ENCODE measurements at regions of chr17 and their contacts with region 1.

Region 1: GRCh38 chr17:29143894-29144293 is 36.3 kb downstream of the MYO18A start:
- DNase-seq: peak; percentile 37
- ATAC-seq: no peak
- H3K4me3 ChIP-seq: no peak overlapping the region
- H3K27ac ChIP-seq: no peak overlapping the region
- H3K4me1 ChIP-seq: peaks cover 11% of the 10 kb centered on the region
- H3K27me3 ChIP-seq: no peaks in the 10 kb centered on the region
- CTCF ChIP-seq: peak; percentile 52

Region 2: GRCh38 chr17:29124117-29124924 is 19.6 kb before region 1 on chr17:
- CTCF ChIA-PET with region 1: interaction called, 23 read pairs
- POLR2A ChIA-PET with region 1: no interaction called
- intact Hi-C with region 1: loop called (anchors 1 kb)
- DNase-seq: peak; percentile 72
- ATAC-seq: peak; percentile 92
- H3K4me3 ChIP-seq: no peak overlapping the region
- H3K27ac ChIP-seq: no peak overlapping the region
- H3K4me1 ChIP-seq: peaks cover 14% of the 10 kb centered on the region
- H3K27me3 ChIP-seq: no peaks in the 10 kb centered on the region
- CTCF ChIP-seq: peak; percentile 67

Region 3: DNA sequence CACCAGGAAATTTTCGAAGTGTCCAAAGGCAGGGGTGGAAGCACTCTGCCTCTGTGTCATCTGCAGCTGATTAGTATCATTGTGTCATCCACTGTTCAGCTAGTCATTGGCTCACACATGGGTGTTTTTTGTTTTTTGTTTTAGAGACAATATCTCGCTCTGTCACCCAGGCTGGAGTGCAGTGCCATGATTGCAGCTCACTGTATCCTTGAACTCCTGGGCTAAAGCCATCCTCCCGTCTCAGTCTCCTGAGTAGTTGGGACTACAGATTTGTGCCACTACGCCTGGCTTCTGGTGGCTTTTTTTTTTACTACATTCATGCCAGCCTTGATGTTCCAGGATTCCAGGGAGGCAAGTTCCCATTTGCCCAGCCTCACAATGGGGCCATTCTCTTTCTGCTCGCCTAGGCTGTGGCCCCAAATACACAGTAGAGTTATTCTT is 68.8 kb after region 1 on chr17:
- CTCF ChIA-PET with region 1: no interaction called
- POLR2A ChIA-PET with region 1: no interaction called
- intact Hi-C with region 1: no loop called
- DNase-seq: no peak
- ATAC-seq: no peak
- H3K4me3 ChIP-seq: no peak overlapping the region
- H3K27ac ChIP-seq: no peak overlapping the region
- H3K4me1 ChIP-seq: no peaks in the 10 kb centered on the region
- H3K27me3 ChIP-seq: no peaks in the 10 kb centered on the region
- CTCF ChIP-seq: no peak

Region 4: DNA sequence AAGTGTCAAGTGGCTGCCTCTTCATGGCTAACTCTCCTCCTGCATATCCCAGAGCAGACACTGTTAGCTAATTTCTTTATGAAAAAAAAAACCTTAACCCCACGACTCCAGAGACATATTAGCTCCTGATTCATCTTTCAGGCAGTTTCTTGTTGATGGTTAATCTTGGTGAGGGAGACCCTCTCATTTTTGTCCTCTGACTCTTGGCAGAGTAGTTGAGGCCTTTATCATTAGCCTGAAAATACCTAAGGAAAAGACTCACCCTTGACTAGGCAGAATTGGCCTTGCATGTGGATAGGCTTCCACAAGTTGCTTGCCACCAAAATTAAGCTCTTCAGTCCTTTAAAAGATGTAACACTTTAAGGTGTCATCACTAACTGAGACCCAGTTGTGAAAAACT is 106.8 kb after region 1 on chr17:
- CTCF ChIA-PET with region 1: no interaction called
- POLR2A ChIA-PET with region 1: no interaction called
- intact Hi-C with region 1: no loop called
- DNase-seq: no peak
- ATAC-seq: no peak
- H3K4me3 ChIP-seq: no peak overlapping the region
- H3K27ac ChIP-seq: no peak overlapping the region
- H3K4me1 ChIP-seq: no peaks in the 10 kb centered on the region
- H3K27me3 ChIP-seq: no peaks in the 10 kb centered on the region
- CTCF ChIP-seq: no peak